ENCODE measurements at regions of chr15 and their contacts with region 1.

Region 1: GRCh38 chr15:89057504-89058133 is 30.6 kb upstream of the ABHD2 start:
- DNase-seq: peak; percentile 60 to 99
- H3K4me3 ChIP-seq: no peak overlapping the region
- H3K27ac ChIP-seq: no peak overlapping the region
- H3K4me1 ChIP-seq: peaks cover 0 to 2% (median 0%) of the 10 kb centered on the region in 4 experiments; a peak in 4 of 7 replicates
- H3K27me3 ChIP-seq: 0 out of 7 replicates have a peak, but pooled peaks cover 0 to 3% (median 0%) of the 10 kb centered on the region in 4 experiments
- CTCF ChIP-seq: peak; percentile 92 to 100 (median 99)
- EP300 ChIP-seq: no peak
- POLR2A ChIP-seq: no peak
- RAD21 ChIP-seq: peak; percentile 96 to 98

Region 2: GRCh38 chr15:88878720-88879184 is 178.9 kb before region 1 on chr15:
- CTCF ChIA-PET with region 1: interaction called, 11 read pairs
- POLR2A ChIA-PET with region 1: no interaction called
- DNase-seq: peak in 1 of 2 experiments; percentile 89
- H3K4me3 ChIP-seq: no peak overlapping the region
- H3K27ac ChIP-seq: no peak overlapping the region
- H3K4me1 ChIP-seq: peaks cover 0 to 6% (median under 1%) of the 10 kb centered on the region in 4 experiments; a peak in 3 of 7 replicates
- H3K27me3 ChIP-seq: no peaks in the 10 kb centered on the region
- CTCF ChIP-seq: peak; percentile 89 to 96 (median 95)
- EP300 ChIP-seq: no peak
- POLR2A ChIP-seq: no peak
- RAD21 ChIP-seq: peak; percentile 80 to 87

Region 3: DNA sequence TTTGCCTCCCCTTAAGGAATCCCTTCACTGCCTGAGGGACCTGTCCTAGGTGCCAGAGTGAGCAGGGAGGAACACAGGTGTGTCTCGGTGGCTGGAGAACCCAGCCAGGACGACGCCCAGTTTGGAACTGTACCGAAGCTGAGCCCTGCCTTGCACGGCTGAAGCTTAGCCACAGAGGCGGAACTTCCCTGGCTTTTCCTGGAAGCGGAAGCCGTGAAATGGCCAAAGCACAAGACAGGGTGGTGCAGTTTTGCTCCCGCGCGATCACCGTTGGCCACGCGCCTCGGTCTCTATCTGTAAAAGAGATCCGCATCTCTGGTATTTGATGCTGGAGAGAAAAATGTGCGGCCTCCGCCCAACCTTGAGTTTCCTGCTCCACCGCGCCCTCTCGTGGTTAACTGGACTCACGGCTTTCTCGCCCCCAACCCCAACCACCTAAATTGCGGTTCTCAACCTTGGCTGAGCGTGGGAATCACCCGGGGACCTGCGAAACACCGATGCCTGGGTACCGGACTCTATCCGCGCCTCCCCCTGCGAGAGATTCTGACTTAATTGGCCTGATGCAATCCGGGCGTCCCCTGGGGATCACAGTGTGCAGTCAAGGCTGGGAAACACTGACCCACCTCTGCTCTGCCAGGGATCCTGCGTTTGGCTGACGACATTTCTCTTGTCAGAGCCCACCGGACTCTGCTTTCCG is 40.1 kb before region 1 on chr15:
- CTCF ChIA-PET with region 1: interaction called, 12 read pairs
- POLR2A ChIA-PET with region 1: no interaction called
- DNase-seq: peak; percentile 65 to 98
- H3K4me3 ChIP-seq: peak overlapping the region in 1 of 4 experiments; percentile 30; a peak in 3 of 8 replicates
- H3K27ac ChIP-seq: no peak overlapping the region
- H3K4me1 ChIP-seq: peaks cover 2 to 12% (median 3%) of the 10 kb centered on the region in 4 experiments; a peak in 5 of 7 replicates
- H3K27me3 ChIP-seq: no peaks in the 10 kb centered on the region; a peak in 1 of 7 replicates
- CTCF ChIP-seq: peak; percentile 84 to 95 (median 95)
- EP300 ChIP-seq: no peak
- POLR2A ChIP-seq: no peak
- RAD21 ChIP-seq: peak; percentile 82 to 92

Region 4: DNA sequence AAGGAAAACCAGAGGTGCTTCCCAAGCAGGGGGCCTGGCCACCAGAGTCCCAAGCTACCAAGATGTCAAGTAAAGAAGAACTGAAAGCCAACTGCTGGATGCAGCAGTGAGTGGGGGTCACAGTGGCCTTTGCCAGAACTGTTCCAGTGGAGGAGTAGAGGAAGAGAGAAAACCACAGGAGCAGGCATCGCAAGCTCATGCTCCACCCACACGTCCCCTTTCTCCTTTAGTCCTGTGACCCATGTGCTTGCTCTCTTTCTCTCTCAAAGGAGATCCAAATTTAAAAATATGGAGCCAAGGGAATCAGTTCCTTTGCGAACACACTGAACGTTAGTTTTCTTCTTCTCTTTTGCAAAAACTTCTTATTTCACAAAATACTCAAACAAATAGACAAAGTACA is 18.2 kb after region 1 on chr15:
- CTCF ChIA-PET with region 1: interaction called, 33 read pairs
- POLR2A ChIA-PET with region 1: no interaction called
- DNase-seq: no peak
- H3K4me3 ChIP-seq: no peak overlapping the region
- H3K27ac ChIP-seq: no peak overlapping the region
- H3K4me1 ChIP-seq: peaks cover 0 to 3% (median 0%) of the 10 kb centered on the region in 4 experiments; a peak in 1 of 7 replicates
- H3K27me3 ChIP-seq: no peaks in the 10 kb centered on the region
- CTCF ChIP-seq: no peak
- EP300 ChIP-seq: no peak
- POLR2A ChIP-seq: no peak
- RAD21 ChIP-seq: no peak

Region 5: GRCh38 chr15:89101302-89102191 is 43.9 kb after region 1 on chr15:
- CTCF ChIA-PET with region 1: interaction called, 16 read pairs
- POLR2A ChIA-PET with region 1: no interaction called
- DNase-seq: no peak
- H3K4me3 ChIP-seq: no peak overlapping the region
- H3K27ac ChIP-seq: no peak overlapping the region
- H3K4me1 ChIP-seq: no peaks in the 10 kb centered on the region
- H3K27me3 ChIP-seq: no peaks in the 10 kb centered on the region
- CTCF ChIP-seq: no peak
- EP300 ChIP-seq: no peak
- POLR2A ChIP-seq: no peak
- RAD21 ChIP-seq: no peak

Region 6: DNA sequence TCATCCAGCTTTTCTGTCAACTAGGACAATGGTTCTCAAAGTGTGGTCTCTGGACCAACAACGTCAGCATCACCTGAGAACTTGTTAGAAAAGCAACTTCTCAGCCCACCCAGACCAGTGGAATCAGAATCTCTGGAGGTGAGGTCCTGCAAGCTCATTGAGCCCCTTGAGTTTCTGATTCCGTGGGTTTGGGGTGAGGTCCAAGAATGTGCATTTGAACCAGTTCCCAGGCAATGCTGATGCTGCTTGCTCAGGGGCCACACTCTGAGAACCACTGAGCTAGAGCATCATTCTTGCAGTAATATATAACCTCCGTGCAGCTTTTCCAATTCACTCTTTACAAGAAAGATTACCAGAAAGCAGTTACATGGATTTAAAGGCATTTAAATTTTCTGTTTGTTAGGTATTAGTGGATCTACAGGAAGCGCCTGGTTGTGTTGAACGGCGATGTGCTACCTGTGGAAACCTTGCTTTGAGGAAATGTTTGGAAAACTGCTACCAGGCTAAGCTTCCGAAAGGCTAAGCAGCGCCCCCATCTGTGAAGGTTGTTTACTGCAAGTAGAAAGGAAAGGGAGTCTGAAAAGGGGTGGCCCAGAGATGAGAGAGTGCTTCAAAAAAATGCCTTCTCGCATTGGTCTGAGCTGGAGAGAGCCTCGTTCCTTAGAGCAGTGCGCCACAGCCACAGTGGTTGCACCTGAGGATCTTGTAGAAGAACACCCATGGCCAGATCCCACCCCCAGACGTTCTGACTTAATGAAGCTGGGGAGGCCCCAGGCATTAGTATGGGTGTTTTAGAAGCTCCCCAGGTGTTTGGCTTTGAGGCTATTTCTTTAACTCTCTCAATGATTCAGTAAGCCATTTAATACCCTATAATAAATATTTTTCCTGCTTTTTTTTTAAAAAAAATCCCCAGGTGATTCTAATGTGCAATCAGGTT is 113.8 kb after region 1 on chr15:
- CTCF ChIA-PET with region 1: interaction called, 198 read pairs
- POLR2A ChIA-PET with region 1: no interaction called
- DNase-seq: peak; percentile 44 to 93
- H3K4me3 ChIP-seq: no peak overlapping the region
- H3K27ac ChIP-seq: no peak overlapping the region
- H3K4me1 ChIP-seq: peaks cover 0 to 5% (median 1%) of the 10 kb centered on the region in 4 experiments; a peak in 2 of 7 replicates
- H3K27me3 ChIP-seq: no peaks in the 10 kb centered on the region
- CTCF ChIP-seq: peak; percentile 32 to 87 (median 84)
- EP300 ChIP-seq: no peak
- POLR2A ChIP-seq: no peak
- RAD21 ChIP-seq: peak; percentile 79 to 87

Region 7: GRCh38 chr15:89206908-89207331 is 149.3 kb after region 1 on chr15:
- CTCF ChIA-PET with region 1: interaction called, 13 read pairs
- POLR2A ChIA-PET with region 1: no interaction called
- DNase-seq: peak; percentile 50 to 96
- H3K4me3 ChIP-seq: no peak overlapping the region
- H3K27ac ChIP-seq: no peak overlapping the region
- H3K4me1 ChIP-seq: no peaks in the 10 kb centered on the region; a peak in 2 of 7 replicates
- H3K27me3 ChIP-seq: no peaks in the 10 kb centered on the region; a peak in 1 of 7 replicates
- CTCF ChIP-seq: peak; percentile 96 to 98 (median 97)
- EP300 ChIP-seq: no peak
- POLR2A ChIP-seq: no peak
- RAD21 ChIP-seq: peak; percentile 92 to 96